Lower leg skin (tissue), 4 donors: ENCODE measurements at regions of chr12 and their contacts with region 1.

Region 1: GRCh38 chr12:115866909-115867525 is 410.5 kb downstream of the MED13L start:
- DNase-seq: peak in 1 of 2 donors; percentile 60
- H3K4me3 ChIP-seq: no peak overlapping the region
- CTCF ChIP-seq: no peak
- POLR2A ChIP-seq: no peak

Region 2: GRCh38 chr12:115922952-115923564 is 56.0 kb after region 1 on chr12:
- intact Hi-C with region 1: loop called (anchors 2 kb)
- DNase-seq: peak in 1 of 2 donors; percentile 72
- H3K4me3 ChIP-seq: no peak overlapping the region
- CTCF ChIP-seq: no peak
- POLR2A ChIP-seq: no peak